ENCODE measurements at regions of chr16 and their contacts with region 1.

Region 1: DNA sequence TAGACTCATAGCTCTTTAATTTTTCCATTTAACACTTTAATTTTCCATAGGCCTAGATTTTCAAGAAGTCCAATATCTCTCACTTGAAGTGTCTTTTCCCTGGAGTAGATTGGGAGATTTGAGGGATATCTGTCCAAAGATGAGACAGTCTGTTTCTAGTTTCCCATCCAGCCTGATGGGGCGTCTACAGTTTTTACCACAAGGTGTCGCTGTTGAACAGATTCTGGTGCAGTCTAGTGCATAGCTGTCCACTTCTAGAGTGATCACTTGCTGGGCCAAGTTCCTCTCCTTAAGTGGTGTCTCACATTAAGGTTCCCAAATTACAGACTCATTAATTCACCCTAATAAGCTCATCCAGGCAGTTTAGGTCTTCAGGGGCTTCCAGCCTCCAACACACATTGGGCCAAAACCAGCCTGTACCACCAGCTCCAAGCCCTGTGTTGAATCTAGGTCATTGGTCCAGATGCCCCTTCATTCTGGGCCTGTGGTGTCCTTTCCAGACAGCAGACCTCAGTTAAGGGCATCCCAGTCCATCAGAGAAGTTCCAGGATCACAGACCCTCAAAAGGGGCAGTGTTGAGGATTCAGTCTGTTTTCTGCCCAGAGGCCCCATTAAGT is 9.4 kb downstream of the SNX20 start:
- DNase-seq: peak; percentile 72
- H3K4me3 Mint-ChIP-seq: no peak overlapping the region
- H3K27ac Mint-ChIP-seq: peak overlapping the region; percentile 51
- H3K4me1 Mint-ChIP-seq: peaks cover 46% of the 10 kb centered on the region
- H3K27me3 Mint-ChIP-seq: no peaks in the 10 kb centered on the region

Region 2: GRCh38 chr16:50696575-50697420 is 25.0 kb after region 1 on chr16:
- CTCF ChIA-PET with region 1: interaction called, 15 read pairs
- POLR2A ChIA-PET with region 1: no interaction called
- DNase-seq: peak; percentile 41
- H3K4me3 Mint-ChIP-seq: peak overlapping the region; percentile 62
- H3K27ac Mint-ChIP-seq: peak overlapping the region; percentile 86
- H3K4me1 Mint-ChIP-seq: peaks cover 71% of the 10 kb centered on the region
- H3K27me3 Mint-ChIP-seq: peaks cover 4% of the 10 kb centered on the region

Region 3: DNA sequence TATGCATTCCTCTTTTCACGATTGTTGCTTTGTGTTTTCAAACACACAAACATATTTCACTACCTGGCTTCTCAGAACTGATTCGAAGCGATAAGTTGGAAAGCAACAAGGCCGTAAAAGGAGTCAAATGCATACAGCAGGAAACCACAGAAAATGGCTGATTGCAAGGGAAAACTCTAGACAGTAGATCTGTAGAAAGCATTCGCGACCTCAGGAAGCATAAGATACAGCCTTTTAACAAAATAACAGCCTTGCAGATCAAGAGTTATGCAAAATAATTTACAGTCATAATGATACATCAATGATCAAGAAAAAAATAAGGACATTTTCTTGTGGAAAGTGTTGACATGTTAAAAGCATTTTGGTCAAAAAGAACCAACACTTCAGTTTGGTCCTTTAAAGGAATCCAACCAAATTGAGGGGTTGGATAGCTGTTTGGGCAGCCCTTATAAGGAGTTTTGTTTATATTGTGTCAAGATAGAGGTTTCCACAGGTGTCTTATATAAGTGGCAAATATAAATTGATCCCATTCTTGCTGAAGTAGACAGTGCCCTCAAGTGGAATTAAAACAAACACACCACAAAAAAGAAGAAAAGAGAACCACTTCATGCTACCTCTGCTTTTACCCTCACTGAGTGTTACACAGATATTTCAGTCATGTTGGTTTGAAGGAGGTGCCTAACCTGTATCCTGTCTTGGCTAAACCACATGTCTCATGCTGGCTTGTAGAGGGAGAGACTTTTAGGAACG is 75.6 kb after region 1 on chr16:
- CTCF ChIA-PET with region 1: interaction called, 17 read pairs
- POLR2A ChIA-PET with region 1: interaction called, 13 read pairs
- DNase-seq: peak; percentile 67
- H3K4me3 Mint-ChIP-seq: peak overlapping the region; percentile 95
- H3K27ac Mint-ChIP-seq: peak overlapping the region; percentile 88
- H3K4me1 Mint-ChIP-seq: peaks cover 59% of the 10 kb centered on the region
- H3K27me3 Mint-ChIP-seq: no peaks in the 10 kb centered on the region

Region 4: DNA sequence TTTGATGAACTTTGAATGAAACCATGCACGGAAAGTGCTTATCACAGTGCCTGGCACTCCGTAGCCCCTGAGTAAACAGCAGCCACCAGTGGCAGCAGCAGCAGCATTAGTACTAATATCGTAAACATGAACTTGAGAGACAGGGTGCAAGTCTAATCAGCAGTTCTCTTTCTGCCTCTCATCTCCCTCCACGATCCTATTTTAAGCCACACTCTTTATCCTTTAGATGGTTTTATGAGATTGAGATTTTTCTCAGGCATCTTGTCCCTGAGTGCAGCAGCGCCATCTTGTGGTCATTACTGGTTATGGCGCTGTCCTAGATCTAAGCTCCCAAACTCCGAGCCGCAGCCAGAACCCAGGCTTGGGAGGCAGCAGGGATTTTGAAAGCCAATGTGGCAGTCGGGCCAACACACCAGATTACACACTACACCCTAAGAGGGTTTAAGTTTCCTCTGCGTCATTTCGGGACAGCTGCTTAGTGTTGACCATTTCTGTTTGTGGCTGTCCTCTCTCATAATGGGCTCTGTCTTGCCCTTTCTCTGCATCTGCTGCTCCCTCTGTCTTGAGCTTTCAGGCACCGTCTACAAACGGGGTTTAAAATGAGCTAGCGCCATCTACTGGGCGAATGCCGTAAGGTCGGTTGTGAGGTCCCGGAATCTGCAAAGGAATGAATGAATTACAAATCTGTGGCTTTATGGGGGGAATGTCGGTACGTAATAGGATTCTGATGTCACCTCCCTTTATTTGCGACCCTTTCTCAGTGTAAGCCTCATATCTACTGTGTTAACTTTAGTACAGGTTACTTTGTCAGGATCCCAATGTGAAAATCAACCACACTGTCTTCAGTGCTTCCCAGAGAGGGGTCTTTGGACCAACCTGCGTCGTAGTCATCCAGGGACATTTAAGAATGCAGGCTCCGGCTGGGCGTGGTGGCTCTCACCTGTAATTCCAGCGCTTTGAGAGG is 134.6 kb after region 1 on chr16:
- CTCF ChIA-PET with region 1: interaction called, 50 read pairs
- POLR2A ChIA-PET with region 1: interaction called, 4 read pairs
- DNase-seq: peak; percentile 90
- H3K4me3 Mint-ChIP-seq: peak overlapping the region; percentile 59
- H3K27ac Mint-ChIP-seq: peak overlapping the region; percentile 71
- H3K4me1 Mint-ChIP-seq: peaks cover 17% of the 10 kb centered on the region
- H3K27me3 Mint-ChIP-seq: no peaks in the 10 kb centered on the region